ENCODE measurements at regions of chr15 and their contacts with region 1.

Region 1: GRCh38 chr15:77633134-77633912 is 611 bp upstream of the LINGO1 start:
- DNase-seq: peak; percentile 13
- H3K4me3 ChIP-seq: peak overlapping the region; percentile 32
- H3K27me3 ChIP-seq: peaks cover 35% of the 10 kb centered on the region
- CTCF ChIP-seq: peak; percentile 100

Region 2: GRCh38 chr15:77599899-77600298 is 33.4 kb before region 1 on chr15:
- CTCF ChIA-PET with region 1: interaction called, 11 read pairs
- POLR2A ChIA-PET with region 1: no interaction called
- DNase-seq: no peak
- H3K4me3 ChIP-seq: no peak overlapping the region
- H3K27me3 ChIP-seq: no peaks in the 10 kb centered on the region
- CTCF ChIP-seq: no peak

Region 3: DNA sequence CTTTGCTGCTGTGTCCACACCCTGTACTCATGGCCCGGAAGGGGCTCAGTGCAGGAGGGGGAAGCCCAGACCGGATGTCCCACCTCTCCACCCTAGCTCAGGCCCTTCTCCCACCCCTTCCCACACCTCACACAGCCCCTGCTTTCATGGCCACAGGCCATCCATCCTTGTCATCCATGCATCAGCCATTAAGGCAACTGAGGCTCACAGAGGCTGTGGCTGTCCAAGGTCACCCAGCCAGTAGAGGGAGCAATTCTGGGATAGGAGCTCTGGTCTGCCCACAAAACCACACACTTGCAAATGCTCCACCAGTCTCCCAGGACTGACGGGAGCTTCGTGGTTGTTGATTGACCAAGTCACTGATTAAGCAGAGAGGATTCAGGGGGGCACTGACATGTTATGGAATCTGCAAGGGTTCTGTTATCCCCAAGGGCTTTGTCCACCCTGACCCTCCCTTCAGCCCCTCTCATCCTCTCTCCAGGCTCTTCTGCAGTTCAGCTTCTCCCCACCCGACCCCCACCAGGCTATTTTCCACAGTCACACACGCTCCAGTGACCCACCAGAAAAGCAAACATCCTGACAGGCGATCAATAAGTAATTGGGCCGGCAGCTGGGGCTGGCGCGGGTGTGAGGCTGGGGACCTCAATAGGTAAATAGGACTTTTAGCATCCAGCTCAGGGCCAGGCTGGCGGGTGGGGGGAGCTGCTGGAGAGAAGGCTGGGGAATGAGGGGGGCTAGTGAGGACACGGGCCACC is 15.7 kb before region 1 on chr15:
- CTCF ChIA-PET with region 1: interaction called, 24 read pairs
- POLR2A ChIA-PET with region 1: no interaction called
- DNase-seq: no peak
- H3K4me3 ChIP-seq: no peak overlapping the region
- H3K27me3 ChIP-seq: peaks cover 2% of the 10 kb centered on the region
- CTCF ChIP-seq: peak; percentile 44; the same call in 1 of the 2 replicates

Region 4: DNA sequence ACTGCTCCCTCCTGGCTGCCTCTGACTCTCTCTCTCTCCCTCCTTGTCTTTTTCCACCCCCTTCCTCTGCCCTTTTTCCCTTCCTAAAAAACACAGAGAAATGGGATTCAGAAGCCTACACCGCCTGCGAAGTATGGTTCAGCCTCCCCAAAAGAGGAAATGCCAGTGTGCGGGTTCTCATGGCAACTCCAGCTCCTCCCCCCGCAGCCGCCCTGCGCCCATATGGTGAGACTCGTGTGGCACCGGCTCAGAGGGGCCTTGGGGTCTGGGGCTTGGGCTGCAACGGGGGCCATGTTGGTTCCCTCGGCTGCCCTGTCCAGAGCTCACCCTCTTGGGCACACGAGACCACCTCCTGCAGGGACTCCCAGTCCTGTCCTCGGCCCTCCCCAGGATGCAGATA is 23.0 kb after region 1 on chr15:
- CTCF ChIA-PET with region 1: interaction called, 23 read pairs
- POLR2A ChIA-PET with region 1: no interaction called
- DNase-seq: no peak
- H3K4me3 ChIP-seq: no peak overlapping the region
- H3K27me3 ChIP-seq: peaks cover 37% of the 10 kb centered on the region
- CTCF ChIP-seq: no peak

Region 5: DNA sequence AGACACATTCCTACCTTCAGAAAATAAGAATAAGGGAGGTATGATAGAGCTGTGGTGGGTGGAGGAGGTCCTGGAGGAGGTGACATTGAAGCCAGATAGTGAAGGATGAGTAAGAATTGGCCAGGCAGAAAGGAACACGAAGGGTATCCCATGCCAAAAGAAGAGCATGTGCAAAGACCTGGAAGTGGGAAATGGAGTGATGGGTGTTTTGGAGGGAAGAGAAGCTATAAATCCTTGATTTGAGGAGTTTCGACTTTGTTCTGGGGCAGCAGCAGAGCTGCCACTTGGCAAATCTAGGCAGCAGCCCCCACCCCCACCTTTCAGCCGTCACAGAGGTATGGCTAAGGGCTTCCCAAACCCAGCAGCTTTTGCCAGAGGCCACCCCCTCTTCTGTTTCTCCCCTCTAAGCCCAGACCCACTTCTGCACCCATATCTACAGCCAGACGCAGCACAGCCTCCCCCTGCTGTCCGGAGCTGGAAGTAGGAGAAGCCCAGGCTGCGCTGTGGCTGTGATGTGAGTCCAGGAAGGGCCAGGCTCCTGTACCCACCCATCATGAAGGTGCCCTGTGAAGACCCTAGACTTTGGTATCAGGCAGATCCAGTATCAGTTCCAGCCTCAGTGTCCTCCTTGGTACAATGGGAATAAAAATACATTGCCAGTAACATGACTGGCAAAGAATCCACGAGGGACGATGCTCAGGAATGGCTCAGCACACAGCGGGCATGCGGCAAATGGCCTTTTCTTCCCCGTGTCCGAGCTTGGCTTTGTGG is 188.1 kb after region 1 on chr15:
- CTCF ChIA-PET with region 1: interaction called, 82 read pairs
- POLR2A ChIA-PET with region 1: no interaction called
- DNase-seq: no peak
- H3K4me3 ChIP-seq: no peak overlapping the region
- H3K27me3 ChIP-seq: peaks cover 43% of the 10 kb centered on the region
- CTCF ChIP-seq: peak; percentile 94

Measured in BJ (cell line).